GM13977 (cell line): ENCODE measurements at regions of chr14 and their contacts with region 1.

Region 1: DNA sequence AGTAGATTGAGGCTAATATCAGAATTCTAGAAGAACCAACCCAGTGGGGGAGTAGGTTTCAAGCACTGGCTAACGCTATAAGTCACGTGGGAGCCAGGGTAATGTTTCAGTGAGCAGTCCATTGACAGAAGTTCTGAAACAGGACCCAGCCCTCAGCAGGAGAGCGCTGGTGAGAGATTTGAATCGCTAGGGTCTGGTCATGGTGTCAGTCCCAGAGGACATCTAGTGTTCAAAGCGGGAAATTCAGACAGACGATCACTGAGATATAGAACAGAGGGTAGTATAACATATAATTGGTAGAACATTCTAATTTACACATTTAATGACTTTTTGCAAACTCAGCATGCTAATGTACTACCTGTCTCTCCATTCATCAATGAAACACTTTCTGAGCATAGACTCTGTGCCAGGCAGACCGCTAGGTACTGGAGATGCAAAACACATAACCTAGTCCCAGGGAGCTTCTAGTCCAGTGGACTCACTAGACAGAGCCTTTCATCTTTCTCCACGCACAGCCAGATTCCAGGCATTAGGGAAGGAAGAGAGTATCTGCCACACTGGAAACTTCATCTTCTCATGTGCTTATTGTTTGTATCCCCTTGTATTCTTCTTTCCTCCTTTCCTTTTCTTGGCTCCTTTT is 35.4 kb upstream of the RNASE3 start:
- DNase-seq: peak; percentile 69
- CTCF ChIP-seq: peak; percentile 80

Region 2: GRCh38 chr14:20690848-20691523 is 164.8 kb before region 1 on chr14:
- in situ Hi-C with region 1: loop called (anchors 5 kb)
- DNase-seq: peak; percentile 72
- CTCF ChIP-seq: peak; percentile 84

Region 3: DNA sequence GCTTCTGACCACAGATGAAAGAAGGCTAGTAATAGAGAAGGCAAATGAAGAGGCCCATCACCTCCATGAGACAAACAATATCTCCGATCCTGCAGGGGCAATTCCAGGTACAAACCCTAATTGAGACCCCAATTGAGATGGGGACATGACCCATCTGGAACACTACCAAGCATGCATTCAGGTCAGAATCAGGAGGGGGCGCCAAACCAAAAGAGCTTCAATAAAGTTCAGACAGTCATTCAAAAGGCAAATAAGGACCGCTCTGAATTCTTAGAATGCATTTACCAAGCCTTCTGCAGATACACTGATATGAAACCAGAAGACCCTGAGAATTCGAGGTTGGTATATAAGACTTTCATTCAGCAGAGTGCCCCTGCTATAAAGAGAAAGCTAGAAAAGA is 97.8 kb before region 1 on chr14:
- in situ Hi-C with region 1: loop called (anchors 25 kb)
- DNase-seq: peak; percentile 25
- CTCF ChIP-seq: peak; percentile 55